K562 (cell line): ENCODE measurements at regions of chr17 and their contacts with region 1.

Region 1: GRCh38 chr17:11682646-11683045 is 84.4 kb downstream of the DNAH9 start:
- DNase-seq: no peak
- ATAC-seq: no peak
- H3K4me3 ChIP-seq: no peak overlapping the region
- H3K27ac ChIP-seq: no peak overlapping the region
- H3K4me1 ChIP-seq: no peaks in the 10 kb centered on the region
- H3K27me3 ChIP-seq: no peaks in the 10 kb centered on the region
- CTCF ChIP-seq: no peak
- EP300 ChIP-seq: no peak
- POLR2A ChIP-seq: no peak
- RAD21 ChIP-seq: no peak

Region 2: DNA sequence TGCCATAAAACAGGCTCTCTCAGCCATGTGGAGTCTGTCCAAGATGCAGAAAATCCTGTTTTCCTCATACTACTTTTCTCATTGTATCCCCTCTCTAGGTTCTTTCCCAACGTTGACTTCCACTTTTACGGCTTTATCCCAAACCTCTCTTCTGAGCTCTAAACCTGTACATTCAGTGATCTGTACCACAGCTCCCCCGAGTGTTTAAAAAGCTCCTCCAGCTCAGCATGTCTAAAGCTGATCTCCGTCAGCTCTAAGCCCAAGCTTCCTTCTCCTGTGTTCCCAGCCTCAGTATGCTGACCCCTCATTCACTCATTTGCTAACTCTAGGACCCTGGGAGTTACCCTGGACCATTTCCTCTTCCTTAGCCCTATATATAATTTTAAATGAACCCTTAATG is 60.2 kb after region 1 on chr17:
- CTCF ChIA-PET with region 1: no interaction called
- POLR2A ChIA-PET with region 1: no interaction called
- in situ Hi-C with region 1: no loop called
- intact Hi-C with region 1: loop called (anchors 10 kb)
- DNase-seq: no peak
- ATAC-seq: no peak
- H3K4me3 ChIP-seq: no peak overlapping the region
- H3K27ac ChIP-seq: no peak overlapping the region
- H3K4me1 ChIP-seq: no peaks in the 10 kb centered on the region
- H3K27me3 ChIP-seq: no peaks in the 10 kb centered on the region
- CTCF ChIP-seq: peak in 2 of 3 experiments; percentile 20 to 30; a peak in 2 of 6 replicates
- EP300 ChIP-seq: no peak
- POLR2A ChIP-seq: no peak
- RAD21 ChIP-seq: no peak